ENCODE measurements at regions of chr17 and their contacts with region 1.

Region 1: GRCh38 chr17:43316522-43317142 is 82.2 kb upstream of the ARL4D start:
- DNase-seq: peak in 3 of 10 donors; percentile 8 to 36 (median 31)
- ATAC-seq: no peak
- H3K4me3 Mint-ChIP-seq: peak overlapping the region in 4 of 10 donors; percentile 7 to 64 (median 51)
- H3K27ac Mint-ChIP-seq: peak overlapping the region in 8 of 10 donors; percentile 6 to 84 (median 58)
- H3K4me1 Mint-ChIP-seq: peaks cover 5 to 16% (median 13%) of the 10 kb centered on the region in 4 donors
- H3K27me3 Mint-ChIP-seq: no peaks in the 10 kb centered on the region

Region 2: GRCh38 chr17:43024407-43025289 is 292.0 kb before region 1 on chr17 and contains the start of gene RND2:
- POLR2A ChIA-PET with region 1: interaction called, 10 read pairs
- DNase-seq: peak; percentile 72 to 93 (median 78)
- ATAC-seq: peak; percentile 66
- H3K4me3 Mint-ChIP-seq: peak within 1 kb of the TSS; percentile 84 to 95 (median 92)
- H3K27ac Mint-ChIP-seq: peak within 1 kb of the TSS; percentile 85 to 96 (median 94)
- H3K4me1 Mint-ChIP-seq: peaks cover 18 to 38% (median 27%) of the 10 kb centered on the region in 4 donors
- H3K27me3 Mint-ChIP-seq: no peaks in the 10 kb centered on the region
- polyA plus RNA-seq, gene RND2: 0.08 to 0.09 TPM in 2 of 3 donors, not detected in the other

Region 3: GRCh38 chr17:43211480-43212402 is 104.9 kb before region 1 on chr17 and contains the start of gene TMEM106A:
- POLR2A ChIA-PET with region 1: interaction called, 189 read pairs
- DNase-seq: peak; percentile 54 to 85 (median 66)
- ATAC-seq: peak; percentile 88 to 90
- H3K4me3 Mint-ChIP-seq: peak within 1 kb of the TSS; percentile 88 to 100 (median 99)
- H3K27ac Mint-ChIP-seq: peak within 1 kb of the TSS; percentile 95 to 99 (median 97)
- H3K4me1 Mint-ChIP-seq: peaks cover 24 to 45% (median 41%) of the 10 kb centered on the region in 4 donors
- H3K27me3 Mint-ChIP-seq: no peaks in the 10 kb centered on the region
- polyA plus RNA-seq, gene TMEM106A: 4.1 to 5.5 (median 4.2) TPM

Region 4: GRCh38 chr17:43349142-43349541 is 32.5 kb after region 1 on chr17:
- POLR2A ChIA-PET with region 1: no interaction called
- DNase-seq: no peak
- ATAC-seq: no peak
- H3K4me3 Mint-ChIP-seq: no peak overlapping the region
- H3K27ac Mint-ChIP-seq: no peak overlapping the region
- H3K4me1 Mint-ChIP-seq: peaks cover 0 to 10% (median under 1%) of the 10 kb centered on the region in 4 donors
- H3K27me3 Mint-ChIP-seq: no peaks in the 10 kb centered on the region

Region 5: GRCh38 chr17:43367737-43368242 is 51.2 kb after region 1 on chr17:
- POLR2A ChIA-PET with region 1: interaction called, 56 read pairs
- DNase-seq: peak in 2 of 10 donors; percentile 88 to 93
- ATAC-seq: peak; percentile 56 to 67
- H3K4me3 Mint-ChIP-seq: peak overlapping the region; percentile 79 to 98 (median 97)
- H3K27ac Mint-ChIP-seq: peak overlapping the region; percentile 99 to 100 (median 100)
- H3K4me1 Mint-ChIP-seq: peaks cover 32 to 63% (median 46%) of the 10 kb centered on the region in 4 donors
- H3K27me3 Mint-ChIP-seq: no peaks in the 10 kb centered on the region

Region 6: GRCh38 chr17:43483674-43484372 is 167.2 kb after region 1 on chr17 and contains the start of gene DHX8:
- POLR2A ChIA-PET with region 1: interaction called, 17 read pairs
- DNase-seq: peak; percentile 96 to 99 (median 98)
- ATAC-seq: peak; percentile 94 to 96
- H3K4me3 Mint-ChIP-seq: peak within 1 kb of the TSS; percentile 95 to 100 (median 100)
- H3K27ac Mint-ChIP-seq: peak within 1 kb of the TSS; percentile 97 to 100 (median 100)
- H3K4me1 Mint-ChIP-seq: peaks cover 10 to 48% (median 35%) of the 10 kb centered on the region in 4 donors
- H3K27me3 Mint-ChIP-seq: no peaks in the 10 kb centered on the region
- polyA plus RNA-seq, gene DHX8: 16.3 to 28.4 (median 28.2) TPM

Measured in naive thymus-derived CD8-positive, alpha-beta T cell (primary cell).